ENCODE measurements at regions of chr10 and their contacts with region 1.

Region 1: GRCh38 chr10:97072851-97073665 is 112.7 kb downstream of the SLIT1 start:
- DNase-seq: peak; percentile 74 to 95 (median 86)
- H3K4me3 ChIP-seq: no peak overlapping the region
- H3K27ac ChIP-seq: no peak overlapping the region
- H3K4me1 ChIP-seq: no peaks in the 10 kb centered on the region
- H3K27me3 ChIP-seq: peaks cover 5% of the 10 kb centered on the region
- CTCF ChIP-seq: peak; percentile 78 to 87 (median 84)
- POLR2A ChIP-seq: no peak

Region 2: GRCh38 chr10:96814264-96814663 is 258.8 kb before region 1 on chr10:
- intact Hi-C with region 1: no loop called
- DNase-seq: no peak
- H3K4me3 ChIP-seq: no peak overlapping the region
- H3K27ac ChIP-seq: no peak overlapping the region
- H3K4me1 ChIP-seq: no peaks in the 10 kb centered on the region
- H3K27me3 ChIP-seq: no peaks in the 10 kb centered on the region
- CTCF ChIP-seq: no peak
- POLR2A ChIP-seq: no peak

Region 3: DNA sequence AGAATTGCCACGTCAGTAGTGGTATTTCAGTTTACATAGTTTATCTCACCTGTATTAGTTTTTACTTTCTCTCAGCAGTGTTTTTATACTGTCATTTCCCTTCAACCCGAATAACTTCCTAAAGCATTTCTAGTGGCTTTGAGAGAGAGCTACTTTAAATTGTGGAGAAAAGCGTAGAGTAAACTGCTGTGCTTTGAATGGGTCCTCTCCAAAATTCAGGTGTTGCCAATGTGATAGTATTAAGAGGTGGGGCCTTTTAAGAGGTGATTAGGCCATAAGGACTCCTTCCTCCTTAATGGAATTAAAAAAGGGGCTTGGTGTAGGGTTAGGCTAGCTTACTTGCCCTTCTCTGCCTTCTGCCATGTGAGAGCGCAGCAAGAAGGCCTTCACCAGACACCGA is 142.6 kb before region 1 on chr10:
- intact Hi-C with region 1: no loop called
- DNase-seq: no peak
- H3K4me3 ChIP-seq: no peak overlapping the region
- H3K27ac ChIP-seq: no peak overlapping the region
- H3K4me1 ChIP-seq: no peaks in the 10 kb centered on the region
- H3K27me3 ChIP-seq: no peaks in the 10 kb centered on the region
- CTCF ChIP-seq: no peak
- POLR2A ChIP-seq: no peak

Region 4: GRCh38 chr10:97210543-97210961 is 137.5 kb after region 1 on chr10:
- intact Hi-C with region 1: loop called (anchors 2 to 5 kb)
- DNase-seq: peak; percentile 45 to 92 (median 68)
- H3K4me3 ChIP-seq: no peak overlapping the region
- H3K27ac ChIP-seq: no peak overlapping the region
- H3K4me1 ChIP-seq: no peaks in the 10 kb centered on the region
- H3K27me3 ChIP-seq: no peaks in the 10 kb centered on the region
- CTCF ChIP-seq: peak; percentile 85 to 99 (median 92)
- POLR2A ChIP-seq: no peak

Region 5: GRCh38 chr10:97378933-97379921 is 306.2 kb after region 1 on chr10:
- intact Hi-C with region 1: no loop called
- DNase-seq: no peak
- H3K4me3 ChIP-seq: no peak overlapping the region
- H3K27ac ChIP-seq: no peak overlapping the region
- H3K4me1 ChIP-seq: no peaks in the 10 kb centered on the region
- H3K27me3 ChIP-seq: no peaks in the 10 kb centered on the region
- CTCF ChIP-seq: no peak
- POLR2A ChIP-seq: no peak